ENCODE measurements at regions of chr1 and their contacts with region 1.

Region 1: DNA sequence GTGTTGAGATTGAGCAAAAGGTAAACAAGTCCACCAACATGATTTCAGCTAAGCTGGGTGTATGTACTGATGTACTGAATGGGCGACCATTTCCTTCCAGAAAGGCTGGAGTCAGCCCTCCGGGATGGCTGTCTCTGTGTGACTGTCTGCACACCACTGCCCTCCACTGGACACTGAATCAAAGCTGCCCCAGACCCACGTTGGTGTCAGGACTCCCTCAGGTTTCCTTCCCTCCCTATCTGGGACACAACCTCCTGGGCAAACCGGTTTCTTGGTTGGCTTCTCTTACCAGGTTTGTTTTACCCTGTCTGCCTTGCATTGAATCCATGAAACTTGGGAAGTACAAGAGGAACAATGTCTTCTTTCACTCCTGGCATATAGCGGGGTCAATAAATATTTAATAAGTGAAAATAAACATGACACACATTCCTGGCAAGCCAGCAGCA is 5.3 kb upstream of the SRP9 start:
- ATAC-seq: peak; percentile 91 to 96 (median 94)
- H3K4me3 ChIP-seq: no peak overlapping the region
- H3K27ac ChIP-seq: no peak overlapping the region
- H3K4me1 ChIP-seq: peaks cover 14 to 20% of the 10 kb centered on the region in 2 donors

Region 2: DNA sequence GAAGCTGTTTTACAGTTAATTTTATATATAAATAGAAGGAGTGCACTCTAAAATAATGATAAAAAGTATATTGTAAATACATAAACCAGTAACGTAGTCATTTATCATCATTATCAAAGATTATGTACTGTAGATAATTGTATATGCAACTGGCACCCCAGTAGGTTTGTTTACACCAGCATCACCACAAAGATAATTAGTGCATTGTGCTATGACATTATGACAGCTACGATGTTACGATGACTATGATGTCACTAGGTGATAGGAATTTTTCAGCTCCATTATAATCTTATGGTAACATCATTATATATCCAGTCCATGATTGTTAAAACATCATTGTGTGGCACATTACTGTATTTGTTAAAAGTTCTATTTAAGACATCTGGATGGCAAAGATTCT is 529.7 kb before region 1 on chr1:
- in situ Hi-C with region 1: no loop called
- ATAC-seq: no peak
- H3K4me3 ChIP-seq: no peak overlapping the region
- H3K27ac ChIP-seq: no peak overlapping the region
- H3K4me1 ChIP-seq: no peaks in the 10 kb centered on the region

Region 3: DNA sequence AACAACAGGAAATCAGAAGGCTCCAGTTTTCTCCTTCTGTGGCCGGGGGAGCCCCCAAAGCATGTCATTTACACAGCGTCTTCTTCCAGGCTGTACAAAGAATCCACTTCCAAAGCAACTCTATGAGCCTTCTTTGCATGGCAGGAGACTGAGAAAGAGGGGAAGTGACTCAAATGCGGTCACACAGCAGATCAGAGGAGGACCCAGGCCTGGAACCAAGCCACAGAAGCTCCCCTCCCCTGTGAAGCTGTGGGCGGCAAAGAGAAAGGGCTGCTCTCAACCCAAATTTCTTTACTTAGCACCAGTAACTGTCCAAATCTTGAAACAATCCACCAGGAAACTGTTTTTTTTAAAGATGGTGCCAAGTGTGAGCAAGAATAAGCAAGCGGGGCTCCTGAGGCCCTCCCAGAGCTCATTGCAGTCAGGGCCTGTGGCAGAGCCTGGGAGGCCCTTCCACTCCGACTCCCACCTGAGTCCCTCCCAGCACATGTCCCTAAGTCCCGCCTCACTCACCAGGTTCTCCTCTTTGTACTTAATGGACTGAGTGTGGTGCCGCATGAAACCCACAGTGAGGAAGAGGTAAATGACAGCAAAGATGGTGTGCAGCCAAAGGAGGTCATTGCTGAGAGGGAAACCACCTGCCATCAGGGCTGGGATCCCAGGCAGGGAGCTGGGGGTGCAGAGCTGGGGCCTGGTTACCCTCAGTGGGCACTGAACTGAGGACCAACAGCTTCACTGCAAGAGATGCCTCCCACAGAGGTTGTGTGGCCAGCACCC is 93.9 kb after region 1 on chr1:
- in situ Hi-C with region 1: loop called in 1 of 9 experiments (anchors 25 kb)
- ATAC-seq: peak in 1 of 8 experiments; percentile 29
- H3K4me3 ChIP-seq: no peak overlapping the region
- H3K27ac ChIP-seq: no peak overlapping the region
- H3K4me1 ChIP-seq: peaks cover 3 to 7% of the 10 kb centered on the region in 2 donors

Measured in motor neuron (in vitro differentiated cells).